Heart right ventricle (tissue), 16 donors: ENCODE measurements at regions of chr3 and their contacts with region 1.

Region 1: GRCh38 chr3:46276502-46277099 is 34.3 kb downstream of the CCR3 start:
- DNase-seq: peak; percentile 49 to 61
- ATAC-seq: peak in 7 of 8 donors; percentile 47 to 80 (median 69)
- H3K4me3 ChIP-seq: no peak overlapping the region
- H3K27ac ChIP-seq: peak overlapping the region in 1 of 10 donors; percentile 20
- H3K4me1 ChIP-seq: peaks cover 0 to 18% (median 0%) of the 10 kb centered on the region in 9 donors
- H3K27me3 ChIP-seq: peaks cover 0 to 10% (median 0%) of the 10 kb centered on the region in 7 donors
- CTCF ChIP-seq: peak; percentile 25 to 88 (median 62)

Region 2: GRCh38 chr3:46349485-46350261 is 73.1 kb after region 1 on chr3:
- intact Hi-C with region 1: no loop called
- DNase-seq: no peak
- ATAC-seq: no peak
- H3K4me3 ChIP-seq: no peak overlapping the region
- H3K27ac ChIP-seq: peak overlapping the region in 1 of 10 donors; percentile 57
- H3K4me1 ChIP-seq: peaks cover 0 to 33% (median 0%) of the 10 kb centered on the region in 9 donors
- H3K27me3 ChIP-seq: peaks cover 0 to 48% (median 11%) of the 10 kb centered on the region in 7 donors
- CTCF ChIP-seq: no peak

Region 3: DNA sequence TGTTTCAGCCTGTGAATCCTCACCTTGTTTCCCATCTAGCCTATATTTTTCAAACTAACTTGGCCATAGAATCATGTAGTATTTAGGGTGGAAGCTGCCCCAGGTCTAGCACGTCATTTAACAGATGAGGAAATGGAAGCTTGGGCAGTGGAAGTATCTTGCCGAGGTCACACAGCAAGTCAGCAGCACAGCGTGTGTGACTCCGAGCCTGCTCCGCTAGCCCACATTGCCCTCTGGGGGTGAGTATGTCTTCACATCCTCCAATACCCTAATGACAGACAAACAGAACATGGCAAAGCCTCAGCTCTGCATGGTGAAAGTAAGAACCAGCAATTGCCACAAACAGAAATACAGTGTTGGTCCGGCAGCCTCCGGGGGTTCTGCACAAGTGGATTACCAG is 92.0 kb after region 1 on chr3:
- intact Hi-C with region 1: loop called in 3 of 10 experiments (anchors 5 to 10 kb)
- DNase-seq: peak; percentile 44 to 46
- ATAC-seq: peak in 7 of 8 donors; percentile 64 to 85 (median 74)
- H3K4me3 ChIP-seq: no peak overlapping the region
- H3K27ac ChIP-seq: peak overlapping the region in 1 of 10 donors; percentile 86
- H3K4me1 ChIP-seq: peaks cover 0 to 50% (median 0%) of the 10 kb centered on the region in 9 donors
- H3K27me3 ChIP-seq: peaks cover 0 to 45% (median 7%) of the 10 kb centered on the region in 7 donors
- CTCF ChIP-seq: peak in 4 of 9 donors; percentile 21 to 64 (median 25)

Region 4: DNA sequence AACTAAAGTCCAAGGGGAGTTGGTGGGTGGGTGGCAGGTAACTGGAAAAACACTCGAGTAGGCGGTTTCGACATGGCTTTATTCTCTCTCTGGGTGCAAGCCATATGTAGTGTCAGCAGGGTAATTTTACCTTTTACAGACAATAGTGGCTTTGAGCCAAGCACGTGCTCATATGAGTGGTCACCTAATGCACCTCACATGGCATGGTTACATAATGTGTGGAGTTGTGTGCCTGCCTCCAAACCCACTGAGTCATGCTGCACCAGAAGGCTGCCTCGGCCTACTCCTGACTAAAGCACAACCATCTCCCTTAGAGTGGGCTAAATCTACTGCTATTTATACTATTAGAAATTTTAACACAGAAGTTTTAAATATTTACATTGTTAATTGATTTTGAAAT is 147.0 kb after region 1 on chr3:
- intact Hi-C with region 1: loop called in 3 of 10 experiments (anchors 5 to 10 kb)
- DNase-seq: no peak
- ATAC-seq: no peak
- H3K4me3 ChIP-seq: no peak overlapping the region
- H3K27ac ChIP-seq: no peak overlapping the region
- H3K4me1 ChIP-seq: peaks cover 0 to 7% (median 0%) of the 10 kb centered on the region in 9 donors
- H3K27me3 ChIP-seq: no peaks in the 10 kb centered on the region
- CTCF ChIP-seq: no peak

Region 5: GRCh38 chr3:46442576-46443562 is 166.3 kb after region 1 on chr3:
- intact Hi-C with region 1: loop called in 3 of 10 experiments (anchors 5 to 10 kb)
- DNase-seq: peak in 1 of 2 donors; percentile 24
- ATAC-seq: peak in 3 of 8 donors; percentile 31 to 47 (median 38)
- H3K4me3 ChIP-seq: no peak overlapping the region
- H3K27ac ChIP-seq: no peak overlapping the region
- H3K4me1 ChIP-seq: peaks cover 0 to 7% (median 0%) of the 10 kb centered on the region in 9 donors
- H3K27me3 ChIP-seq: no peaks in the 10 kb centered on the region
- CTCF ChIP-seq: peak in 4 of 9 donors; percentile 45 to 65 (median 58)